ENCODE measurements at regions of chrX and their contacts with region 1.

Region 1: GRCh38 chrX:133415276-133416105 is at the start of gene GPC4:
- DNase-seq: peak; percentile 56
- H3K4me3 ChIP-seq: peak within 1 kb of the TSS; percentile 40 to 45
- H3K27ac ChIP-seq: peak within 1 kb of the TSS; percentile 50 to 54
- H3K4me1 ChIP-seq: no peaks in the 10 kb centered on the region
- H3K27me3 ChIP-seq: no peaks in the 10 kb centered on the region
- CTCF ChIP-seq: no peak
- POLR2A ChIP-seq: no peak
- total RNA-seq, gene GPC4: 8.0 to 15.2 TPM

Region 2: DNA sequence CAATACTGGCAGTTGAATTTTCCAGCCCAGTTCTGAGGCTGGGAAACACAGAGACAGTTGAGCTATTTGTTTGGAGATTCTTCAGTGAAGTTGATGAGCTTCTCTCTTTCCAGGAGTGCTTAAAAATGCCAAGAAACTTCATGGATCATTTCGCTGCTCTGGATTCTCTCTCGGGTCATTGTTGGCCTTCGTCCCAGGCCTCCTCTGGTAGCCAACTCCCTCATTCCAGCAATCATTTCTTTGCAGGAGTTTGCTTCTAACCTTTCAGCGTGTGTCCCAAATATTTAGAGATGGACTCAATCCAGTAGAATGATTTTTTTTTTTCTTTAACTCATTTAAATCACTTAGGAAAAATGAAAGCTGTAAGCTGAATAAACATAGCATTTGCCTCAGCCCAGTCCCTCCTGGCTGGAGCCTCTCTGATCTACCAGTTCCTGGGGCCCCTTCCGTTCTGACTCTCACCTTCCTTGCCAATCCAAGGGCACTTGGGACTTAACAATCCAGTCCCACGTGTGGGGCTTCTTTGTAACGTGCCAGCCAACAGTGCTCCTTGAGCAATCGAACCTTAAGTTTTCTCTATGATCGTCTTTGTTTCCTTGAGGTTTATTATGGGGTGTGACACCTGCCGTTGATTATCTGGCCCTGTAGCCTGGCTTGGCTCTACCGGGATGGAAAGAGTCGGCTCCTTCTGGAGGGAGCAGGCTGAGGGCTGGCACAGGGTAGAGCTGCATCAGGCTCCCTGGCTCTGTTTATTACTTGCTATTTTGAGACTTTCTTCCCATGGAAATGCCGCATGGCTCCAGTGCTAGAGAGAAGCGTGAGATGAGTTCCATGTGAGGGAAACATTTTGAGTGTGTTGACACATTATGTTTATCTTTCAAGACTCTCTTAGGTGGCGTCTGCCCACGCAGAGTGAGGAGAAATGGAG is 80.2 kb after region 1 on chrX:
- intact Hi-C with region 1: loop called (anchors 10 kb)
- DNase-seq: peak; percentile 4
- H3K4me3 ChIP-seq: no peak overlapping the region
- H3K27ac ChIP-seq: no peak overlapping the region
- H3K4me1 ChIP-seq: no peaks in the 10 kb centered on the region
- H3K27me3 ChIP-seq: no peaks in the 10 kb centered on the region
- CTCF ChIP-seq: no peak
- POLR2A ChIP-seq: no peak

Measured in prostate gland (tissue), 2 donors.